ENCODE measurements at regions of chr4 and their contacts with region 1.

Region 1: GRCh38 chr4:173257732-173258717 is 76.1 kb downstream of the HMGB2 start:
- DNase-seq: no peak
- H3K4me3 ChIP-seq: no peak overlapping the region
- CTCF ChIP-seq: peak; percentile 88

Region 2: GRCh38 chr4:173013232-173013930 is 244.6 kb before region 1 on chr4:
- CTCF ChIA-PET with region 1: interaction called, 203 read pairs
- POLR2A ChIA-PET with region 1: no interaction called
- DNase-seq: no peak
- H3K4me3 ChIP-seq: no peak overlapping the region
- CTCF ChIP-seq: peak; percentile 56

Region 3: GRCh38 chr4:173019711-173020110 is 238.3 kb before region 1 on chr4:
- CTCF ChIA-PET with region 1: interaction called, 203 read pairs
- POLR2A ChIA-PET with region 1: interaction called, 4 read pairs
- DNase-seq: no peak
- H3K4me3 ChIP-seq: no peak overlapping the region
- CTCF ChIP-seq: no peak

Region 4: GRCh38 chr4:173025131-173025530 is 232.9 kb before region 1 on chr4:
- CTCF ChIA-PET with region 1: interaction called, 120 read pairs
- POLR2A ChIA-PET with region 1: interaction called, 4 read pairs
- DNase-seq: no peak
- H3K4me3 ChIP-seq: no peak overlapping the region
- CTCF ChIP-seq: peak; percentile 54

Region 5: GRCh38 chr4:173039617-173040577 is 218.1 kb before region 1 on chr4:
- CTCF ChIA-PET with region 1: interaction called, 10 read pairs
- POLR2A ChIA-PET with region 1: no interaction called
- DNase-seq: no peak
- H3K4me3 ChIP-seq: no peak overlapping the region
- CTCF ChIP-seq: no peak

Region 6: DNA sequence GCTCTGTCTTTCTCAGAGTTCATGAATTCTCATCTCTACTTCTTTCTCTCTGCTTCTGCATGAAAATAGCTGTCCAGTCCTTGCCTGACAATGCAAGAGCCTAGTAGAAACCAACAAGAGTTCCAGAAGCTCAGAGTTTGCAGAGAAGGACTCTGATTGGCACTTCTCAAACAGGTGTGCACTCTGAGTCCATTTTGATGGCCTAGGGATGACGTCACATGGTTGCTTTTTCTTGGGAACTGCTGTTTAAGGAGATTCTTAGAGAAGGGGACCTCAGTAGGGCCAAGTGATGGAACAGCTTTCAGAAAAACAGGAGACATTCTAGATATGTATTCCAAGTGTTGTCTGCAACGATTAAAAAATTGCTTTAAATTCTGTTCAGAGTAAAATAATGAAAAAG is 19.3 kb after region 1 on chr4:
- CTCF ChIA-PET with region 1: interaction called, 12 read pairs
- POLR2A ChIA-PET with region 1: no interaction called
- DNase-seq: no peak
- H3K4me3 ChIP-seq: no peak overlapping the region
- CTCF ChIP-seq: no peak

Region 7: DNA sequence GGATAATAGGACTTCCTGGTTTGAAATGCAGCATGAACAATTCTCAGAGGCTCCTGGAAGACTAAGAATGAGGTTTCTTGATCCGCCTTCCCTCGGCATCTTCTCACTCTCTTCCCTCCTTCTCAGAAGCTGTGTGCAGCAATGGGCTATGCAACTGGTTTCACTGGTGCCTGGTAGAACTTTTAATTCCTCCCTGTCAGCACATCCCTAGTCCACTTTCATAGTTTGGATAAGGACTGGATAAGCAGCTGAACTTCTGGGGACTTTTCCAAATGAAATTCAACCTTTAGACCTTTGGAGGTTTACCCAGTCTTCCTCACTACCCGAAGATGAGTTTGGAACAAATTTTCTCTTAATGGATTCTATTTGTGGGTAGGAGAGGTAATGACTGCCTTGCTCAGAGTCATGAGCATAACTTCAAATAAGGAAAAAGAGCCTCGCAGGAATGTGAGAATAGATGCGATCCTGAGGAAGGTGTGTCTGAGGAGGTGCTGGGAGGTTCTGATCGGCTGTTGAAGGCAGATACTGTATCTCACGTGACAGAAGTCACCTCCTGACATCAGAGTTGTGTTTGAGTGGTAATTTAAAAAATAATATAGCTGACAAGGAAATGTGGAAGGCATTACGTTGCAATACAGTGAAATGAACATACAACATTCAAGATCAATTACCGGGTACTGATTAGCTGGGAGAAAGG is 328.0 kb after region 1 on chr4:
- CTCF ChIA-PET with region 1: no interaction called
- POLR2A ChIA-PET with region 1: no interaction called
- DNase-seq: no peak
- H3K4me3 ChIP-seq: no peak overlapping the region
- CTCF ChIP-seq: no peak

Measured in AG04449 (cell line).